ENCODE measurements at regions of chr1 and their contacts with region 1.

Region 1: DNA sequence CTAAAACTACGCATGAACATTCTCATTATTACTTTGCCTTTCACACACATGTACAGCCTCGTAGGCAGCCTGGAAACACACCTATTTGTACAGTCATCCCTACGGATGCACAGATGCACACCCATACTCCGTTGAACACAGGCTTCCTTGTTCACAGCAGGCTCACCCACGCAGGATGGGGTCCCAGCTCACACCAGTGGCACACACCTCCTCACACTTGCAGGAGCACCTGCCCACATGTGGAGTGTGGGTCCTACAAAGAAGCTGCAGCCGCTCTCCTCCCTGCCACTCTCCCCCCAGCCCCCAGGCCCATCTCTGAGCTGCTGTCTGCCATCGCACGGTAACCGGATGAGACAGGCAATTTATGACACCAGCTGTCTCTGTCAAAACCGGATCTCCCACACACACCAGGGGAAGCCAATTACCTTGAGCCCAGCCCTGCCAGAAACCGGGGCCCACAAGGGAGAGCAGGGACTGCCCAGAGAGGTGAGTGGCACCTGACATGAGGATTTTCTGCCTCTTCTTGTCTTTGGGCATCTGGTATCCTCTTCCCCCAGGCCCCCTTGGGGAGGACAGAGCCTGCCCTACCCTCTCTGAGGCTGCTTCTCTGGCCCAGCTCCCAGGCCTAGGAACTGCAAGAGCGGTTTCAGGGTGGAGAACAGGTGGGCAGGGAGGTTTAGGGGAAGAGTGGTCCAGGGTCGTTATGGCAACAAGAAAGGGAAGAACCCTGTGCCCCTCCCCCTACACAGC is 175.4 kb downstream of the IGSF21 start:
- DNase-seq: no peak
- ATAC-seq: no peak
- H3K4me3 ChIP-seq: no peak overlapping the region
- H3K27ac ChIP-seq: no peak overlapping the region
- H3K4me1 ChIP-seq: no peaks in the 10 kb centered on the region
- H3K27me3 ChIP-seq: peaks cover 0 to 85% (median 58%) of the 10 kb centered on the region in 7 donors
- CTCF ChIP-seq: no peak

Region 2: DNA sequence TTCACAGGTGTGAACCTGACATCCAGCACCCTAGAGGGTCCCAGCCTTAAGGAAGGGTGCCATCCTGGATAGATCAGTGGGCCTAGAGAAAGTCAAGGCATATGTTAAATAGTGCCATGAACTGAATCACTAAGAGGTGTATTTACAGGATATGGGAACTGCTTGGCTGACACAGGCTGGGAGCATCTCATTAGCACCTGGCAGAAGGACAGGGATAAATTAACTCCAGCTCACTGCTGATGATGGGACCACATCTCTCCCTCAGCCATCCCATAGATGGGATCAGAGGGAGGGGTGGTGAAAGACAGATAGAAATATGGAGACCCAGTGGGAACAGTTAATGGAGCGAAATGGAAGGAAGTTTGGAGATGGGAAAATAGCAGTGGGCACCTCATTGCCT is 53.4 kb before region 1 on chr1:
- intact Hi-C with region 1: loop called in 1 of 10 experiments (anchors 10 kb)
- DNase-seq: no peak
- ATAC-seq: no peak
- H3K4me3 ChIP-seq: no peak overlapping the region
- H3K27ac ChIP-seq: no peak overlapping the region
- H3K4me1 ChIP-seq: no peaks in the 10 kb centered on the region
- H3K27me3 ChIP-seq: peaks cover 0 to 58% (median 36%) of the 10 kb centered on the region in 7 donors
- CTCF ChIP-seq: no peak

Region 3: DNA sequence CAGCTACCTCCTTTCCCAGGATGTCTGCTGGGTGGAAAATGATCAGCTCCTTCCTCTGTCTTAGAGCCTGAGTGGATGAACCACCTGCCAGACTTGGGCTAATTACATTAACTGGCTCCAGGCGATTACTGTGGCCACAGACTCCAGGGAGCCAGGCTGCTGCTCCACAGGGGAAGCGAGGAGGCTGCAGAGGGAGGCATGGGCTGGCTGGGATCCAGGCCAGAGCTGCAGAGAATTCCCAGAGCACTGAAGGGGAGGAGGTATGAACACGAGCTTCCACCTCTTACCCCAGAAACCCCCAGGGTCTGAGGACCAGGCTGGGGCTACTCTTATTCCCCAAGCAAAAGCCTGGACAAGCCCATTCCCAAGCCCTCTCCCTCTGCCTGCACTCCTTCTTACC is 61.7 kb after region 1 on chr1:
- intact Hi-C with region 1: no loop called
- DNase-seq: no peak
- ATAC-seq: no peak
- H3K4me3 ChIP-seq: no peak overlapping the region
- H3K27ac ChIP-seq: no peak overlapping the region
- H3K4me1 ChIP-seq: no peaks in the 10 kb centered on the region
- H3K27me3 ChIP-seq: peaks cover 0 to 54% (median 34%) of the 10 kb centered on the region in 7 donors
- CTCF ChIP-seq: no peak